Activated T-helper 1 cell treated with anti-CD3 and anti-CD28 coated beads, Interleukin-12 subunit alpha, Interleukin-12 subunit beta, Interleukin-2, Interleukin-4 antibody, amounts not matched to agents 30 ng/mL and 10 ng/mL and 1 ng/mL, durations not matched to agents 14 hours and 24 hours and 36 hours (primary cell): ENCODE measurements at regions of chr17 and their contacts with region 1.

Region 1: GRCh38 chr17:80663781-80664206 is 119.2 kb downstream of the RPTOR start:
- DNase-seq: peak; percentile 37
- H3K4me3 Mint-ChIP-seq: peak overlapping the region; percentile 76
- H3K27ac Mint-ChIP-seq: peak overlapping the region; percentile 82
- H3K4me1 Mint-ChIP-seq: peaks cover 84% of the 10 kb centered on the region
- H3K27me3 Mint-ChIP-seq: no peaks in the 10 kb centered on the region

Region 2: DNA sequence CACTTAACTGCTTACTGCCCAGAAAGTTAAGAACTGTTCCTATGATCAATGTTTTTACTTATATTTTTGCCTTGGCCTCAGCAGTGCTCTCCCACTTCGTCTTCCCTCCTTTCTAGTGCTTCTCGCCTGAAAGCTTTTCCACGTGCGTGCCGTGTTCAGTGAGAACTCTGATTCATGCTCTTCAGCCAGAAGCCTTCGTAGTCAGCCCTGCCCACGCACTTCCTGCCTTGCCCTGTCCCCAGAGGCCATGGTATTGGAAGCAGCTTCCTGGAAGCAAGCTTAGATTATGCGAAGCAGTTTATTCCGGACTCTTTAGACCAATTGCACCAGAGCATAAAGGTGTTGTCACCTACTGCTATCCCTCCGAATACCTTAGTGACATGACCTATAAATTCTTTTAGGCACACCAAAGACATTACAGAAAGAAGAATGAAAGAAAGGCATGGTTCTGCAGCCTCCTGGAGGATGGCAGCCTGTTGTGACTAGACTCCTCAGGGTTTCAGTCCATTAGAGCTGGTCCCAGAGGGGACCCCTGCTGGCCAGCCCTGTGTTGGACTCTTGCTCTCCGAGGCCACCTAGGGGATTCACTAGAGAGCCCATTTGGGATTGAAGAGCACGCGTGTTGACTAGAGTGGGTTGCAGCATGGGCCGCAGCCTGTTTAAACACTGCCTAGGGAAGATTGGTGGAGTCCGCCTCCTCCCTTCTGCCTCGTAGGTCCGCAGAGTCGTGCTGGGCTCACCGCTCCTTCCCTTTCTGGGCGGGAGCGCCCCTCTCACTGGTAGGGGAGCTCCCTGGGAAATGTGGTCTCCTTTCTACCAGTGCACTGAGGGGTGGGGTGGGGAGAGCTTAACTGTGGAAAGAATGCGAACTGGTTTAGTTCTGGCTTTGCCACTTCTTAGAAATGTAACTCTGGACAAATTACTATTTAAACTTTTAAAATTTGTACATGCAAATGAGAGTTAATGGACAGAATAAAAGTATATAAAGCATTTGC is 13.8 kb before region 1 on chr17:
- intact Hi-C with region 1: loop called (anchors 1 kb)
- DNase-seq: peak; percentile 56
- H3K4me3 Mint-ChIP-seq: peak overlapping the region; percentile 68
- H3K27ac Mint-ChIP-seq: peak overlapping the region; percentile 90
- H3K4me1 Mint-ChIP-seq: peaks cover 71% of the 10 kb centered on the region
- H3K27me3 Mint-ChIP-seq: no peaks in the 10 kb centered on the region

Region 3: DNA sequence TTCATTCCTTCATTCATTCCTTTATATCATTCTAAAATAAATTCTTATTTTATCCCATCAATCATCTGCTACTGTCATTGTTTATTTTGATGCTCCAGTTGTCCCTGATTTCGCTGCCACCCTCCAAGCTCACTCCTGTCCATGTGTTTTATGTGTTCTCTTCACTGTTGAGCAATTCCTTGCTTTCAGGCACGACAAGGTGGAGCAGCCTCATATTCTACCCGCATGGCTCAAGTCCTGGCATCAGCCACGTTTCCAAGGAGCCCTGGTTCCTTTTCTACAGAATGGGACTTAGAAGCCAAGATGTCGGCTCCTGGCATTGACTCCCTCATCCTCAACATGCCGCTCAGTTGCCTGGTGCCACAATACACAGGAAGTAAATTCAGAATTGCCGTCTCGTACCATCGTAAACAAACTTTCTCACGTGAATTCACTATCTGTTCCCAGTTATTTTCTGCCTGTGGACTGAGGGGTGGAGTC is 19.9 kb after region 1 on chr17:
- intact Hi-C with region 1: no loop called
- DNase-seq: no peak
- H3K4me3 Mint-ChIP-seq: no peak overlapping the region
- H3K27ac Mint-ChIP-seq: no peak overlapping the region
- H3K4me1 Mint-ChIP-seq: peaks cover 53% of the 10 kb centered on the region
- H3K27me3 Mint-ChIP-seq: no peaks in the 10 kb centered on the region

Region 4: DNA sequence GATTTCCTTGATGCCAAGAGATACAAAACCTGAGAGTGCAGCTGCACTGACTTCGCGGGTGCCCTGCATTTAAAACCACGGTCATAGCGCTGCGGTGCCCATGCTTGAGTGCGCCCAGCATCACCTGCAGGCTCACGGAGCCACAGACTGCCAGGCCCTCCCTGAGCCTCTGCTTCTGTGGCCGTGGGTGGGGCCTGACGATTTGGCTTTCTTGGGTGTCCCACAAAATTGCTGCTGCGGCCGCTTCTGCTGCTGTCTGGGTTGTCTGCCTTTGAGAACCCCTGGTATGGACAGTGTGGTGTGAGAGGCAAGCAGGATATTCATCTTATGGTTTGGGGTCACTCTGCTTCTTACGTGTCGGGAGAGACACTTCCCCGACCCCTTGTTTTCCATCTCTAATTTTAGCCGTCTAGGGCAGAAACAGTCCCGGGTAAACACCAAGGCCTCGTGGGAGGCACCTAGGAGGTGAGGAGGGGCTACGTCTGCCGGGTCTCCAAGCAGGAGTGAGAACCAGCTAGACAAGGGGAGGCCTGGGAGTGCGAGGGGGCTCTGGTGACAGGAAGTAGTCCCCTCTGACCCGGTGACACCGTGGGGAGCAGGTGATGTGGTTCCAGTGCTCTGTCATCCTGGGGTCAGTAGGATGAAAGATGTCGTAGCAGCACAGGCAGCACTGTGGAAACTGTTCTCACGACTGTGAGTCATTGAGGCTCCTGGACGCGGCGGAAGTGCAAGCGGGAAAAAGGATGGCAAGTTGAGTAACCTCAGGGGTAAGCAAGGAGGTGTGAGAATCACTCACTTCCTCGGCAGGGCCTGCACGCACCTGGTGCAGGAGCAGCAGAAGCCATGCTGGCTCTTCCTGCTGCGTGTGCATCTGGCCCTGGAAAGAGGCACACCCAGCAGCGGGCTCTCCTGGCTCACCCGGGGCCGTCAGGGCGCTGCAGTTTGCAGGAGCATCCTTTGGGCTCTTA is 57.1 kb after region 1 on chr17:
- intact Hi-C with region 1: loop called (anchors 2 kb)
- DNase-seq: peak; percentile 67
- H3K4me3 Mint-ChIP-seq: peak overlapping the region; percentile 54
- H3K27ac Mint-ChIP-seq: peak overlapping the region; percentile 89
- H3K4me1 Mint-ChIP-seq: peaks cover 62% of the 10 kb centered on the region
- H3K27me3 Mint-ChIP-seq: no peaks in the 10 kb centered on the region

Region 5: DNA sequence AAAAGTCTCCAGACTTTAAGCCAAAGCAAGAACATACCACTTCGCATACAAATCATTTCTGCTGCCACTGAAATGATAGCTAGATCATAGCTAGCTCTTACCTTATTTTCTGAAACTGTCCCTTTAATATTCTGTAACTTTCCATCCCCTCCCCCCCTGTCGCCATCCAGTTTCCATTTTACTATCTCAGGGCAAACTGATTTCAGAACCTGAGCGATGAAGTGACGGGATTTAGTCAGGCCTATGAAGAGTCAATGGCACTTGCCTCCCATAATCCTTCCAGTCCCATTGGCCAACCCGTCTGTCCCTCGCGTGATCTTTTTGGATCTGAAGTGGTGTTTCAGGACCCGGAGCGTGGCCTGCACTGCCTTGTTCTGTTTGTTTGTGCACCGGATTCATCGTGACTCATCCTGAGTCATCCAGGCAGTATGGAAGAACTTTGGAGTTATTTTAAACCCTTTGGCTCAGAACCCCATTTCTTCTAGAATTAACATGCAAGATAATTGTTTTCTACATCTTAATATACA is 128.0 kb after region 1 on chr17:
- intact Hi-C with region 1: loop called (anchors 5 kb)
- DNase-seq: peak; percentile 49
- H3K4me3 Mint-ChIP-seq: peak overlapping the region; percentile 79
- H3K27ac Mint-ChIP-seq: peak overlapping the region; percentile 99
- H3K4me1 Mint-ChIP-seq: peaks cover 91% of the 10 kb centered on the region
- H3K27me3 Mint-ChIP-seq: no peaks in the 10 kb centered on the region

Region 6: GRCh38 chr17:80891397-80892018 is 227.7 kb after region 1 on chr17:
- intact Hi-C with region 1: loop called (anchors 2 kb)
- DNase-seq: peak; percentile 79
- H3K4me3 Mint-ChIP-seq: peak overlapping the region; percentile 73
- H3K27ac Mint-ChIP-seq: peak overlapping the region; percentile 87
- H3K4me1 Mint-ChIP-seq: peaks cover 73% of the 10 kb centered on the region
- H3K27me3 Mint-ChIP-seq: no peaks in the 10 kb centered on the region